HEK293 (cell line): ENCODE measurements at regions of chr3 and their contacts with region 1.

Region 1: GRCh38 chr3:102536456-102536855 is 101.6 kb downstream of the ZPLD1 start:
- H3K4me3 ChIP-seq: no peak overlapping the region
- H3K27ac ChIP-seq: no peak overlapping the region
- H3K4me1 ChIP-seq: no peaks in the 10 kb centered on the region
- CTCF ChIP-seq: no peak

Region 2: GRCh38 chr3:102235679-102236078 is 300.8 kb before region 1 on chr3:
- CTCF ChIA-PET with region 1: interaction called, 16 read pairs
- POLR2A ChIA-PET with region 1: no interaction called
- H3K4me3 ChIP-seq: no peak overlapping the region
- H3K27ac ChIP-seq: no peak overlapping the region
- H3K4me1 ChIP-seq: no peaks in the 10 kb centered on the region
- CTCF ChIP-seq: peak; percentile 35; the same call in 1 of the 2 replicates

Region 3: GRCh38 chr3:102514241-102514640 is 22.2 kb before region 1 on chr3:
- CTCF ChIA-PET with region 1: no interaction called
- POLR2A ChIA-PET with region 1: no interaction called
- H3K4me3 ChIP-seq: no peak overlapping the region
- H3K27ac ChIP-seq: no peak overlapping the region
- H3K4me1 ChIP-seq: peaks cover 6% of the 10 kb centered on the region; the same call in 1 of the 2 replicates
- CTCF ChIP-seq: no peak

Region 4: DNA sequence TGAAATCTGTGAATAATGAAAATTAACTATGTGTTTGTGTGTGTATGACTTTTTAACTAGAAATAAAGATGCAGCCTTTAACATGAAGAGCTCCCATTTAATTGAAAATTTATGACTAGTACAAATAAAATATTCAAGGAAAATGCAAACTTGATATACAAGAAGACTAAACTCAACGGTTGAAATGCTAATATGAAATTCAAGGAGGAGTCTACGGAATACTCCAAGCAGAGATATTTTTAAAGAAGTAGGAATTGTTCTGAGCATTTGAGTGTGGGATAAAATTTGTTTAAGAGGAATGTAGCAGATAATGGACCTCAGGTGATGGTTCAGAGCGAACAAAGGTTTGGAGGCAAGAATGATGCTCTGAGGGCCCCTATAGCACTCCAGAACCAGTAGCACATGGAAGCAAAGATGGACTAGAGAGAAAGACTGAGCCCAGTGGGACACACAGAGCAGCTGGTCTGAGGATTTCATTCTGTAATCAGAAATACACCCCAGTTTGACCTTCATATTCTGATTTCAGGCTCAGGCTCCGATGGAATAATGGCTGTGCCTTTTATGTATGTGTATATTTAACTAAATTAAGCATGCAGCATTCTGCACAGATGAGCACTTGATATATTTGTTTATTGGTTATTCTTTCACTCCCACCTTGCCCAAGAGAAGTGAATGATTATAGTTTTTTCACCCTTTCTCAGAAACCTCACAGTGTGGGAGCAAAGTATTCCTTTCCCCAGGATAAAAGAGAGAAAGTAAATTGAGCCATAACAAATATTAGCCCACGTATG is 125.4 kb after region 1 on chr3:
- CTCF ChIA-PET with region 1: no interaction called
- POLR2A ChIA-PET with region 1: no interaction called
- H3K4me3 ChIP-seq: no peak overlapping the region
- H3K27ac ChIP-seq: no peak overlapping the region
- H3K4me1 ChIP-seq: no peaks in the 10 kb centered on the region
- CTCF ChIP-seq: no peak

Region 5: GRCh38 chr3:102796804-102797203 is 260.3 kb after region 1 on chr3:
- CTCF ChIA-PET with region 1: no interaction called
- POLR2A ChIA-PET with region 1: no interaction called
- H3K4me3 ChIP-seq: no peak overlapping the region
- H3K27ac ChIP-seq: no peak overlapping the region
- H3K4me1 ChIP-seq: no peaks in the 10 kb centered on the region
- CTCF ChIP-seq: no peak